Endothelial cell of umbilical vein (primary cell): ENCODE measurements at regions of chr2 and their contacts with region 1.

Region 1: GRCh38 chr2:72893594-72894319 is 6.5 kb downstream of the SPR start:
- DNase-seq: peak; percentile 72
- H3K4me3 ChIP-seq: no peak overlapping the region
- H3K27ac ChIP-seq: no peak overlapping the region
- H3K4me1 ChIP-seq: peaks cover 14% of the 10 kb centered on the region
- H3K27me3 ChIP-seq: peaks cover 2 to 3% of the 10 kb centered on the region in 2 experiments
- CTCF ChIP-seq: peak; percentile 62 to 88
- POLR2A ChIP-seq: no peak

Region 2: GRCh38 chr2:72843301-72843700 is 50.5 kb before region 1 on chr2:
- CTCF ChIA-PET with region 1: no interaction called
- POLR2A ChIA-PET with region 1: no interaction called
- dilution Hi-C with region 1: no loop called
- intact Hi-C with region 1: no loop called
- DNase-seq: no peak
- H3K4me3 ChIP-seq: no peak overlapping the region
- H3K27ac ChIP-seq: no peak overlapping the region
- H3K4me1 ChIP-seq: no peaks in the 10 kb centered on the region
- H3K27me3 ChIP-seq: peaks cover 11 to 16% of the 10 kb centered on the region in 2 experiments
- CTCF ChIP-seq: no peak
- POLR2A ChIP-seq: no peak

Region 3: GRCh38 chr2:72963423-72964145 is 69.8 kb after region 1 on chr2:
- CTCF ChIA-PET with region 1: interaction called, 23 read pairs
- POLR2A ChIA-PET with region 1: no interaction called
- dilution Hi-C with region 1: no loop called
- intact Hi-C with region 1: no loop called
- DNase-seq: peak; percentile 14
- H3K4me3 ChIP-seq: no peak overlapping the region
- H3K27ac ChIP-seq: no peak overlapping the region
- H3K4me1 ChIP-seq: no peaks in the 10 kb centered on the region
- H3K27me3 ChIP-seq: no peaks in the 10 kb centered on the region
- CTCF ChIP-seq: no peak
- POLR2A ChIP-seq: no peak